Activated CD4-positive, alpha-beta T cell treated with anti-CD3 and anti-CD28 coated beads, Interleukin-2, amount 10 ng/mL, durations not matched to agents 24 days and 14 days (primary cell): ENCODE measurements at regions of chr1 and their contacts with region 1.

Region 1: DNA sequence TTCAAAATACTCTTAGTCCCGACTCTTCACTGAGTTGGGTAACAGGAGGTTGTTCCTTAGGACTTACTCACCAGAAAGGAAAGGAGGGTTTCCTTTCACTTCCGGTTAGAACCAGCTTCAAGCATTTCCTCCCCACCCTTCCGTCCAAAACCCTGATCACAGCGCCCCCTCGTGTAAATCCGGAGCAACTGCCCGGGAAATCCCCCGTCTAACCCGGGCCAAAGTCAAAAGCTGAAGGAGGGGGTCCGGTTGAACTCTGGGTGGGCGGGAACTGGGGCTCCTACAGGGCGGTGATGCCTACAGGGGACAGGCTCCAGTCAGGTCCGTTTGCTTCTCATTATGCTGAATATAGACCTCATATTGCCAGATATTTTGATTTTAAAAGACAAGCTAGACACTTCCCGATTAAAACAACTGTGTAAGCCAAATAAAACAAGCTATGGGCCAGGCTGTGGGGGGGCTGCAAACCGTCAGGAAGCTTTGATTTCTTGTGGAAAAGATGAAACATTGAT is 15.0 kb upstream of the MTARC2 start:
- DNase-seq: peak; percentile 93
- H3K4me3 Mint-ChIP-seq: peak overlapping the region; percentile 37
- H3K27ac Mint-ChIP-seq: no peak overlapping the region
- H3K4me1 Mint-ChIP-seq: peaks cover 2% of the 10 kb centered on the region
- H3K27me3 Mint-ChIP-seq: peaks cover 15% of the 10 kb centered on the region

Region 2: DNA sequence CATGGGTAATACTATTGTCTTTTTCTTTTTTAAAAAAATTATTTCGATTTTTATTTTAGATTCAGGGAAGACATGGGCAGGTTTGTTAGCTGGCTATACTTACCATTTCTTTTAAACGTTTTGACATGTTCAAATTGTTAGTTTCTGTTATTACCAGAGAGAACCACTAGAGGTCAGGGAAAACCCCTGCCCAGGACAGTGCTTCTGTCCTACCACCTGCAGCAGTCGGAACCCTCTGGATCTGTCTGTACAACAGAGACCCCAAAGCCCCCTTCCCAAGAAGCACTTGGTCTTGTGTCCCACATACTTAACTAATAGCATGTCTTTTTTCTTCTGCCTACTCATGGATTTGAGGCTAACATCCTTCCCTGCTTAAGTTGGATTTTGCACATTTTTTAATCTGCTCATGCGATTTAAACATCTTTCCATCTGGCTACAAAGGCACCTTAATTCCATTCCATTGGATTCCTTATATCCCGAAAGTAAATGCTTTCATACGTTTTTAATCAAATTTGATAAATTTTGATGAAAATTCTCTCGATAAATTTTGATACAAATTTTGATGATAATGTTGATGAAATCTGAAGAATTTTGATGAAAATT is 53.0 kb before region 1 on chr1:
- intact Hi-C with region 1: loop called (anchors 2 kb)
- DNase-seq: peak; percentile 66
- H3K4me3 Mint-ChIP-seq: no peak overlapping the region
- H3K27ac Mint-ChIP-seq: no peak overlapping the region
- H3K4me1 Mint-ChIP-seq: no peaks in the 10 kb centered on the region
- H3K27me3 Mint-ChIP-seq: peaks cover 4% of the 10 kb centered on the region

Region 3: DNA sequence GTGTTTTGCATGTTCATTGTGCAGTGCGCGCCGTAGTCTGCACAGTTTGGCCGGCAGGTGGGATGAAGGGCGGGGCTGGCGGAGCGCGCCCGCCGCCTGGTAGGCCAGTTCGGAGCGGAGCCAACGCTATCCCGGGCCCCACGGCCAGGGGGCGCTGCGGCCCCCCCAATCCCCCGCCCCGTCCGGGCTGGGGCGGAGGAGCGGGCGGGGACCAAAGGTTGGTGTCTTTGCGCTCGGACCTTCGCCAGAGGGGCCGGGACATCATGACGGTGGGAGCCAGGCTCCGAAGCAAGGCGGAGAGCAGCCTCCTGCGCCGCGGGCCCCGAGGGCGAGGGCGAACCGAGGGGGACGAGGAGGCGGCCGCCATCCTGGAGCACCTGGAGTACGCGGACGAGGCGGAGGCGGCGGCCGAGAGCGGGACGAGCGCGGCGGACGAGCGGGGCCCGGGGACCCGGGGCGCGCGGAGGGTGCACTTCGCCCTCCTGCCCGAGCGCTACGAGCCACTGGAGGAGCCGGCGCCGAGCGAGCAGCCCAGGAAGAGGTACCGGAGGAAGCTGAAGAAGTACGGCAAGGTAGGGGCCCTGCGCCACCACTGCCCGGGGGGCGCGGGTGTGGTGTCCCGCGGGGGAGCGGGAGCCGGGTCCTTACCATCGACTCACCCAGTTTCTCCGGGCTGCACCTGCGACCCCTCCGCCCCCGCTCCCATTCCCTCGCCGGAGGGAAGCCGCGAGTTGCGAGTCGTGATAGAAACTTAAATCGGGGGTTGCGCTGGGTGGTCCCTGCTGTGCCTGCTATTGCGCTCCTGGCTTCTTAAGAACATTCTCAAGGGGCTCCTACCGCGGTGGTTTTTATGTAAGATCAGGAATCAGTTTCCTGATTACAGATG is 42.8 kb before region 1 on chr1 and contains the start of gene C1orf115:
- intact Hi-C with region 1: loop called (anchors 1 kb)
- DNase-seq: peak; percentile 92
- H3K4me3 Mint-ChIP-seq: peak within 1 kb of the TSS; percentile 86
- H3K27ac Mint-ChIP-seq: peak within 1 kb of the TSS; percentile 23
- H3K4me1 Mint-ChIP-seq: peaks cover 6% of the 10 kb centered on the region
- H3K27me3 Mint-ChIP-seq: peaks cover 23% of the 10 kb centered on the region
- total RNA-seq, gene C1orf115: 0.05 TPM in 1 of 2 replicates, not detected in the other

Region 4: DNA sequence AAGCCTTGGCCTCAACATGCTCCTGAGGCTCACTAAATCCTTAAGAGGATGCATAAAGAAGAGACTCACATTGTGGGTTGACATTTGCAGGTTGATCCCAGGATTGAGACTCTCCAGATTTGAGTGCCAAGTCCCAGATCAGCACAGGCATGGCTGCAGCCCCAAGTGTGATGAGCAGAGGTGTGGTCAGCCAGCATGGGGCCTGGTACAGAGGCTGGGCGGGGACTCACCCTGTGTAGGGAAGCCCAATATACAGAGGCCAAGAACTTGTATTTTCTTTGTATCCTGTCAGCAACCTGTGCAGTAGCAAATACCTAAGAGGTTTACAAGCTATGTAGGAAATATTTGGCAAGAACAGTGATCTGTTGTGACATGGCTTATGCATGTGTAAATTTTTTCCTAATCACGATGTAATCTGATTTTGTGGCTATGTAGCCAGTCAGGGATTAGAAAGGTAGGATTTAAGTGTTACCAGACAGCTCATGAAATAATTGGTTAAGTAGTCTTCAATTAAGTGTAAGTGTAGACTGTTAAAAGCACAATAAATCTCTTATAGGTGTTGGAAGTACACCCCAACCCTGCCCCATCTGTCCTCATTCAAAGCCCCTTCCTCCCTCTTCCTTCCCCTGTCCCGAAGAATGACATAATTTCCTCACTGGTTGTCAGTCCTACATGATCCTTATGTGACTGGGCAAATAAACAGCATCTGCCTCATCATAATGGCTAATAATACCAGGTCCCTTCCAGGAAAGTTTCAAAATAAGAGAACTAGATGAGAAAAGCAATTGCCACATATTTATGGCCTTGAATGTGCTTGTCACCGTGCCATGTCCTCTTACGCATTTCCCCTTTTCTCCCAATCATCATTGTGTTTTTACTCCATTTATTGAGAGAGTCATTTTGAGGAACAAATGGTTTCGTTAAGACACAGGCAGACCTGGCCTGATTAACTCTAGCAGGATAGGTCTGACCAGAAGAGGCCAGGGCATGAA is 267.0 kb after region 1 on chr1:
- intact Hi-C with region 1: no loop called
- DNase-seq: no peak
- H3K4me3 Mint-ChIP-seq: no peak overlapping the region
- H3K27ac Mint-ChIP-seq: no peak overlapping the region
- H3K4me1 Mint-ChIP-seq: no peaks in the 10 kb centered on the region
- H3K27me3 Mint-ChIP-seq: no peaks in the 10 kb centered on the region